Heart left ventricle (tissue), 16 donors: ENCODE measurements at regions of chr18 and their contacts with region 1.

Region 1: GRCh38 chr18:23812546-23813440 is 123.5 kb downstream of the LAMA3 start:
- DNase-seq: no peak
- ATAC-seq: no peak
- H3K4me3 ChIP-seq: no peak overlapping the region
- H3K27ac ChIP-seq: no peak overlapping the region
- H3K4me1 ChIP-seq: peaks cover 0 to 9% (median 0%) of the 10 kb centered on the region in 12 donors
- H3K27me3 ChIP-seq: no peaks in the 10 kb centered on the region
- CTCF ChIP-seq: peak; percentile 45 to 74 (median 59)
- POLR2A ChIP-seq: no peak

Region 2: DNA sequence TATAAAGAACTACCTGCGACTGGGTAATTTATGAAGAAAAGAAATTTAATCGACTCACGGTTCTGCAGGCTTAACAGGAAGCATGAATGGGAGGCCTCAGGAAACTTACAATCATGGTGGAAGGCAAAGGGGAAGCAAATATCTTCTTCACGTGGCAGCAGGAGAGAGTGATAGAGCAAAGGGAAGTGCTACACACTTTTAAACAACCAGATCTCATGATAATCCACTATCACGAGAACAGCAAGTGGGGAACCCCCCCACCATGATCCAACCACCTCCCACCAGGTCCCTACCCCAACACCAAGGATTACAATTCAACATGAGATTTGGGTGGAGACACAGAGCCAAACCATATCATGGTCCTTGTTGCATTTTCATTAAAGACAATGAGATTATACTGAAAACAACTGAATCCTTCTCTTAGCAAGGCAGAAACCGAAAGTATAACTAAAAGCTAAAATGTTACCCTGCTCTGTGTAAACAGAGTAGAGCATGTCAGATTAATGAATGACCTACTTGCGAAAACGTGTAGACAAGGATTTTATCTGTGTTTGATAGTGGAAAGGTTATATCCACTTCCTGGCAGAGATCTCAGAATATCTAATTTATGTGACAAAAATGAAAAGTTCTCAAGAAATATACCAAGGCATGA is 939.8 kb before region 1 on chr18:
- intact Hi-C with region 1: no loop called
- DNase-seq: no peak
- ATAC-seq: no peak
- H3K4me3 ChIP-seq: no peak overlapping the region
- H3K27ac ChIP-seq: no peak overlapping the region
- H3K4me1 ChIP-seq: no peaks in the 10 kb centered on the region
- H3K27me3 ChIP-seq: peaks cover 0 to 2% (median 0%) of the 10 kb centered on the region in 9 donors
- CTCF ChIP-seq: no peak
- POLR2A ChIP-seq: no peak

Region 3: DNA sequence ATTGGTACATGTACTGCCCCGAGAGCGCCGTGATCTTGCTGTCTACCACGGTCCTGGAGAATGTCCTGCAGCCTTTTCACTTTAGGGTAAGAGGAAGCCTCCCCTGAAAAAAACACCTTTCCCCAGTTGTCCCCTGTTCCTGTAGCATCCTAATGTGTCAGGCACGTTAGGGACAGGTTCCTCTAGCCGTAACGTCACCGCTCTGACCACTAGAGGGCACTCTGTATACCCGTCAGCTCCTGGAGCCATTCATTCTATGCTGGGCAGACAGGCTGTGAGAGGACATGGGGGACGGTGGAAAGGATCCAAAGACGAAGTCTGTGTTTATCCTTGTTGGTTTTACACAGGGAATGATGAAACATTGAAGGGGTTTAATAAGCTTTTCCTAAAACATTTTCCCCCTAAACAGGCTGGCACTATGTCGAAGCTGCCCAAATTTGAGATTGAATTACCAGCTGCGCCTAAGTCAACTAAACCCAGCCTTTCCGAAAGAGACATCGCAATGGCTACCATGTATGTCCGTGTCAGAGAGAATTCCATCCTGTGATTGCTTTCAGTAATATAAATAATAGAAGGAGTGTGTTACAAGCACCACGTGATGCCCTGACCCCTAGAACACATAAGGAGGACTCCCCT is 296.8 kb before region 1 on chr18:
- intact Hi-C with region 1: loop called in 4 of 10 experiments (anchors 5 to 10 kb)
- DNase-seq: peak in 4 of 5 donors; percentile 72 to 78 (median 74)
- ATAC-seq: peak; percentile 91 to 96 (median 94)
- H3K4me3 ChIP-seq: no peak overlapping the region
- H3K27ac ChIP-seq: no peak overlapping the region
- H3K4me1 ChIP-seq: peaks cover 0 to 17% (median 0%) of the 10 kb centered on the region in 12 donors
- H3K27me3 ChIP-seq: no peaks in the 10 kb centered on the region
- CTCF ChIP-seq: peak; percentile 78 to 91 (median 88)
- POLR2A ChIP-seq: no peak

Region 4: DNA sequence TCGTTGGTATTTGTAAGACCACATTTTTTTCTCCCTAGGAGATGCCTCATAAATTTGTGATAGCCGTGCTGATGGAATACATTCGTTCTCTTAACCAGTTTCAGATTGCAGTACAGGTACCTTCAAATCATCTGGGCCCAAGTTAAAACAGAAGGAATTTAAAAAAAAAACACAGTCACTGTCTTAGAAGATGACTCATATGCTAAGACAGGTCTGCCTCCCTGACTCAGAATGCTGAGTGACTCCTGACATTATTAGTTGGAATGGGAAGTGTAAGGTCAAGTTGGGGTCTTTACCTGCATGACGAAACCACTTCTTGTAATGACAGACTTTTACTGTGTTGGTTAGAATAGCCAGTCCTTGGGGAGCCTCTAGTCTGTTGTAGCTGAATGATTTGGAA is 283.2 kb before region 1 on chr18:
- intact Hi-C with region 1: loop called in 2 of 10 experiments (anchors 10 kb)
- DNase-seq: no peak
- ATAC-seq: no peak
- H3K4me3 ChIP-seq: no peak overlapping the region
- H3K27ac ChIP-seq: peak overlapping the region in 1 of 12 donors; percentile 78
- H3K4me1 ChIP-seq: peaks cover 0 to 28% (median 0%) of the 10 kb centered on the region in 12 donors
- H3K27me3 ChIP-seq: no peaks in the 10 kb centered on the region
- CTCF ChIP-seq: no peak
- POLR2A ChIP-seq: no peak

Region 5: GRCh38 chr18:23619388-23619881 is 193.4 kb before region 1 on chr18:
- intact Hi-C with region 1: loop called (anchors 2 to 5 kb)
- DNase-seq: peak in 4 of 5 donors; percentile 19 to 66 (median 36)
- ATAC-seq: peak; percentile 40 to 76 (median 69)
- H3K4me3 ChIP-seq: peak overlapping the region; percentile 16 to 66 (median 48)
- H3K27ac ChIP-seq: peak overlapping the region in 2 of 12 donors; percentile 36 to 39
- H3K4me1 ChIP-seq: peaks cover 0 to 15% (median 4%) of the 10 kb centered on the region in 12 donors
- H3K27me3 ChIP-seq: peaks cover 0 to 30% (median 0%) of the 10 kb centered on the region in 9 donors
- CTCF ChIP-seq: peak in 1 of 12 donors; percentile 26
- POLR2A ChIP-seq: no peak

Region 6: DNA sequence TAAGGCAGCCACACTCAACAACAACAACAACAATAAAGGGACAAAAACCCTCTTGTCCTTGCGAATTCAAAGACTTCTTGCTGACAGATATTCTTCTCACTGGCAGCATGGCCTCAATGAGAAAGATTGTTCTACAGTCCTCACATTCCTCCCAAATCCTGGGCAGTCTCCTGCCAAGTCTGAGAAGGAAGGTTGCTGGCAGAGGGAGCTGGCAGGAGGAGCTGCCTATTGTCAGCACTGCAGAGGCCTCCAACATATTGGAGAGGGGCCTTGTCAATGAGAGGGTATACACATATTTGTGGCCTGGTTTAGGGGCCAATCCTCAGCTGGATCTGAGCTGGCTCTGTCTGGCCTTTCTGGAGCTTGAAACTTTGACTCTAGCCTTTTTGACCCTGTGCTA is 60.0 kb before region 1 on chr18:
- intact Hi-C with region 1: loop called in 1 of 10 experiments (anchors 10 kb)
- DNase-seq: no peak
- ATAC-seq: peak in 1 of 4 donors; percentile 57
- H3K4me3 ChIP-seq: no peak overlapping the region
- H3K27ac ChIP-seq: no peak overlapping the region
- H3K4me1 ChIP-seq: peaks cover 0 to 4% (median 0%) of the 10 kb centered on the region in 12 donors
- H3K27me3 ChIP-seq: no peaks in the 10 kb centered on the region
- CTCF ChIP-seq: no peak
- POLR2A ChIP-seq: no peak

Region 7: DNA sequence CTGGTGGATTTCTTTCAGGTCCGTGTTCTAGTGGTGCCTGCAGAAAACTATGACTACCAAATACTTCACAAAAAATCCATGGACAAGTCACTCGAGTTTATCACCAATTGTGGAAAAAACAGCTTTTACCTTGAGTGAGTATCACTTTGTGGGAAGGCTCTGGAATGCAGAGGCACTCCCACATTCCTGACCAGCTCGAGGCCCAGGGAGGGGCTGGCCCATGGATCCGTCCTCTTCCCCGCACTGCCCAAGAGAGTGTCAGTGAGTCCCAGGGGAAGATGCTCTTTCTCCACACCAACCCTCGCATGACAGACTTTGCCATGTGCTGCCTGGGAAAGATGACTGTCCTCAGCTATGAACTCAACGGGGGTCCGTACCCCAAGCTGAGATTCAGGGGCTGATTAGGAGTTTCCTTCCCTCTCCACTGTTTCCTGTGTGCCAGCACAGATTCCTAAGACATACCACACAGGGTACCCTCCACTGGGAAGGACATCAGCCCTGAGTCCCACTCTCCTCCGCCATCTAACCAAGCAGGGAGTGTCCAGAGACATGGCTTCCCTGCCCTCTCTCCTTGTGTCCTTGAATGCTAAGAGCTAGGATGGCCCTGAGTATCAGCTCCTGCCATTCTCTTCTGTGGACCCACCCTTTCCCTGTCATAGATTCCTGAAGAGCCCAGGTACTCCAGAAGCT is 32.3 kb after region 1 on chr18:
- intact Hi-C with region 1: no loop called
- DNase-seq: no peak
- ATAC-seq: peak in 1 of 4 donors; percentile 18
- H3K4me3 ChIP-seq: no peak overlapping the region
- H3K27ac ChIP-seq: no peak overlapping the region
- H3K4me1 ChIP-seq: no peaks in the 10 kb centered on the region
- H3K27me3 ChIP-seq: no peaks in the 10 kb centered on the region
- CTCF ChIP-seq: no peak
- POLR2A ChIP-seq: no peak

Region 8: DNA sequence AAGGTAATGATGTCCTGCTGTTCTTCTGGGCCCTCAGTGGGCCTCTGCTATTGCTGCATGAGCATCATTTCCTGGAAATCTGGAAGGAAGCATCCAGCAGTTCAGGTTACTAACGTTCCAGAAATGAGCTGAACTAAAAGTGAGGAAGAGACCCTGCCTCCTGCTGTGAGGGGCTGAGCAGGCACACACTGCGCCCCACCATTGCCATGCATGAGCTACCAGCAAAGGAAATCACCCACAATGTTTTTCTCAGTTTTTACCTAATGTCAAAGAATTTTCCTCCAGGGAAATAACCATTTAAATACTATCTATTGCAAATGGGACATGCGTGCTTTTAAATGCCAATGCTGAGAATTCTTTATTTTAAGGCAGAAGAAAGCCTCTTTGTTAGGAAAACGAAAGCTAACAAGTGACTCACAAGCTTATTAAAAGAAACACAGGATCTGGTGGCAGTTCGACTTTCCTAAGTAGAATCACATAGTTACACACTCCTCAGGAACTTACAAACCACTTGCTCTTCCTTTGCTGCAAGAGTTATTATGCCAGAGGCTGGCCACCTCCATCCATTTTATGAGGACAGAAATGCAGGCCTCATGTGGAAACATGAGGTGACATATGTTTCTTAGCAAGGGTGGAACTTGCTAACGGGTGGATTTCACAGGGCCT is 49.1 kb after region 1 on chr18:
- intact Hi-C with region 1: loop called in 1 of 10 experiments (anchors 5 kb)
- DNase-seq: no peak
- ATAC-seq: peak in 2 of 4 donors; percentile 31 to 43
- H3K4me3 ChIP-seq: no peak overlapping the region
- H3K27ac ChIP-seq: peak overlapping the region in 7 of 12 donors; percentile 1 to 54 (median 34)
- H3K4me1 ChIP-seq: peaks cover 0 to 20% (median 0%) of the 10 kb centered on the region in 12 donors
- H3K27me3 ChIP-seq: no peaks in the 10 kb centered on the region
- CTCF ChIP-seq: no peak
- POLR2A ChIP-seq: no peak